ENCODE measurements at regions of chr4 and their contacts with region 1.

Region 1: GRCh38 chr4:40199999-40200874 is 3.4 kb downstream of the RHOH start:
- DNase-seq: peak; percentile 53 to 82
- ATAC-seq: peak; percentile 47 to 73 (median 69)
- H3K4me3 ChIP-seq: peak overlapping the region; percentile 67
- H3K4me3 Mint-ChIP-seq: peak overlapping the region; percentile 100
- H3K27ac ChIP-seq: peak overlapping the region; percentile 92
- H3K27ac Mint-ChIP-seq: peak overlapping the region; percentile 99 to 100
- H3K4me1 ChIP-seq: peaks cover 53% of the 10 kb centered on the region
- H3K4me1 Mint-ChIP-seq: peaks cover 84 to 95% of the 10 kb centered on the region in 2 donors
- H3K27me3 ChIP-seq: no peaks in the 10 kb centered on the region
- H3K27me3 Mint-ChIP-seq: no peaks in the 10 kb centered on the region
- CTCF ChIP-seq: no peak

Region 2: GRCh38 chr4:39638354-39639240 is 561.6 kb before region 1 on chr4 and contains the start of gene SMIM14:
- intact Hi-C with region 1: loop called (anchors 5 kb)
- DNase-seq: peak; percentile 80 to 93
- ATAC-seq: peak; percentile 76 to 90 (median 80)
- H3K4me3 ChIP-seq: peak within 1 kb of the TSS; percentile 76
- H3K4me3 Mint-ChIP-seq: peak within 1 kb of the TSS; percentile 94
- H3K27ac ChIP-seq: peak within 1 kb of the TSS; percentile 90
- H3K27ac Mint-ChIP-seq: peak within 1 kb of the TSS; percentile 94
- H3K4me1 ChIP-seq: peaks cover 21% of the 10 kb centered on the region
- H3K4me1 Mint-ChIP-seq: peaks cover 39 to 48% of the 10 kb centered on the region in 2 donors
- H3K27me3 ChIP-seq: no peaks in the 10 kb centered on the region
- H3K27me3 Mint-ChIP-seq: no peaks in the 10 kb centered on the region
- CTCF ChIP-seq: no peak
- total RNA-seq, gene SMIM14: 12.6 to 21.8 (median 15.2) TPM

Region 3: DNA sequence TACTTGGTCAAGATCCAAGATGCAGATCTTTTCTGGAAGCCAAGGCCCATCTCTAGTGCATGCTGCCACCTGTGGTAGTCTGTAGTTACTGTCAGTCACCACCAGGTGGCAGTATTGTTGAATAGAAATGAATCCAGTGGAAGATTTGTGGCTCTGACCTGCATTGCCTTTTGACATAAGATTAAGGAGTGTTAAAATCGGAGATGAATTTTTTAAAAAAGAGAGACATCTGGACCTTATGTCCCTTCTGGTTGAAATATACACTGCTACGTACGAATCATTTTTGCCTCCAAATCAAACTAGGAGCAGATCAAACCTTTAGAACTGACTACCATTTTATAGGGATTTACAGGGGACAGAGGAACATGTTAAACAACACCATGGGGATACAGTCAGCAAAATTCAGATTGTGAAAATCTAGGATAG is 50.3 kb before region 1 on chr4:
- intact Hi-C with region 1: loop called (anchors 5 kb)
- DNase-seq: peak; percentile 51 to 90
- ATAC-seq: peak; percentile 86 to 98 (median 92)
- H3K4me3 ChIP-seq: no peak overlapping the region
- H3K4me3 Mint-ChIP-seq: no peak overlapping the region
- H3K27ac ChIP-seq: no peak overlapping the region
- H3K27ac Mint-ChIP-seq: no peak overlapping the region
- H3K4me1 ChIP-seq: peaks cover 3% of the 10 kb centered on the region
- H3K4me1 Mint-ChIP-seq: peaks cover 0 to 7% of the 10 kb centered on the region in 2 donors
- H3K27me3 ChIP-seq: no peaks in the 10 kb centered on the region
- H3K27me3 Mint-ChIP-seq: no peaks in the 10 kb centered on the region
- CTCF ChIP-seq: peak; percentile 92

Region 4: DNA sequence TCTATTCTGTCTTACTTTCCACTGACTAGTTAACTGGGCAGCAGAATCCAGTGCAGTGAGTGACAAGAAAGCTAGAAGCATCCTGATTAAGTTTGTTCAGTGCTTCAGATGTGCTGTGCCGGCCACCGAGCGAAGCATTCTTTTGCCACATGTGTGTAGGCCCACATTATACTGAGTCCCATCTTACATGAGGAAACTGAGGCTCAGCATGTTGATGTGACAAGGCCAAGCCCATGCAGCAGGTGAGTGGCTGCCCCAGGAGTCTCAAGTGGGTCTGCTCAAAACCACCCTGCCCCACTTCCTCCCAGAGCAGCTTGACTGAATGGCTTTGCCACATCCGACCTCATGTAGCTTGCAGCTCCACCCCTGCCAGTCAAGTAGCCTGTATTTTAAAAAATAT is 47.1 kb after region 1 on chr4:
- intact Hi-C with region 1: loop called (anchors 5 kb)
- DNase-seq: peak; percentile 38 to 84
- ATAC-seq: peak; percentile 77 to 87 (median 87)
- H3K4me3 ChIP-seq: no peak overlapping the region
- H3K4me3 Mint-ChIP-seq: peak overlapping the region; percentile 53
- H3K27ac ChIP-seq: peak overlapping the region; percentile 48
- H3K27ac Mint-ChIP-seq: peak overlapping the region; percentile 79 to 81
- H3K4me1 ChIP-seq: peaks cover 65% of the 10 kb centered on the region
- H3K4me1 Mint-ChIP-seq: peaks cover 45 to 70% of the 10 kb centered on the region in 2 donors
- H3K27me3 ChIP-seq: no peaks in the 10 kb centered on the region
- H3K27me3 Mint-ChIP-seq: no peaks in the 10 kb centered on the region
- CTCF ChIP-seq: no peak

Region 5: GRCh38 chr4:40309250-40309774 is 109.1 kb after region 1 on chr4:
- intact Hi-C with region 1: loop called (anchors 1 kb)
- DNase-seq: peak; percentile 84 to 96
- ATAC-seq: peak; percentile 72 to 84 (median 73)
- H3K4me3 ChIP-seq: no peak overlapping the region
- H3K4me3 Mint-ChIP-seq: peak overlapping the region; percentile 79
- H3K27ac ChIP-seq: peak overlapping the region; percentile 87
- H3K27ac Mint-ChIP-seq: peak overlapping the region; percentile 88 to 91
- H3K4me1 ChIP-seq: peaks cover 57% of the 10 kb centered on the region
- H3K4me1 Mint-ChIP-seq: peaks cover 54 to 59% of the 10 kb centered on the region in 2 donors
- H3K27me3 ChIP-seq: no peaks in the 10 kb centered on the region
- H3K27me3 Mint-ChIP-seq: no peaks in the 10 kb centered on the region
- CTCF ChIP-seq: peak; percentile 83